ENCODE measurements at regions of chr19 and their contacts with region 1.

Region 1: GRCh38 chr19:34220472-34221063 is 33.8 kb upstream of the GARRE1 start:
- H3K4me3 ChIP-seq: no peak overlapping the region
- H3K27ac ChIP-seq: no peak overlapping the region
- H3K4me1 ChIP-seq: peaks cover 39% of the 10 kb centered on the region
- CTCF ChIP-seq: peak; percentile 73

Region 2: DNA sequence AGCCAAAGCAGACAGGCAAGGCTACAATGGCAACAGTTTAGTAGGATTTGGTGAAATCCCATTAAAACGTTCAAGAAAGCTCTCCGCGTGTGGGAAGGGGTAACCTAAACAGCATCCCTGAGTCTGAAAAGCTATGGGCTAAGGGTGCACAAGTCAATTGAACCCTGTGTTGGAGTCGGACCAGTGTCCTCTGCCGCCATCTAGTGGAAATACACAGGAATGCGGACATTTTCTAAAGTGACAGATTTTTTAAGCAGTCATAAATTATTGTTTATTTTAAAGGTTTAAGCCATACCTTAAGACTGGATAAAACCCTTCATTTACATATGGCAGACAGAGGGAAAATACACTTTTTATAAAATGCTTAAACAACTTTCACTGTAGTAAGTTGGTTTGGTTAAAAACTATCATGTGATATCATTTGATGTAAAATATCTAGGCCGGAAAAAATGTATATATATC is 74.8 kb before region 1 on chr19:
- CTCF ChIA-PET with region 1: interaction called, 17 read pairs
- POLR2A ChIA-PET with region 1: interaction called, 5 read pairs
- H3K4me3 ChIP-seq: no peak overlapping the region
- H3K27ac ChIP-seq: no peak overlapping the region
- H3K4me1 ChIP-seq: peaks cover 3% of the 10 kb centered on the region; the same call in 1 of the 2 replicates
- CTCF ChIP-seq: peak; percentile 93

Region 3: GRCh38 chr19:34178274-34178610 is 42.3 kb before region 1 on chr19:
- CTCF ChIA-PET with region 1: interaction called, 64 read pairs
- POLR2A ChIA-PET with region 1: interaction called, 12 read pairs
- H3K4me3 ChIP-seq: no peak overlapping the region
- H3K27ac ChIP-seq: peak overlapping the region; percentile 46; the same call in 1 of the 2 replicates
- H3K4me1 ChIP-seq: peaks cover 83% of the 10 kb centered on the region
- CTCF ChIP-seq: no peak

Region 4: GRCh38 chr19:34209726-34210125 is 10.8 kb before region 1 on chr19:
- CTCF ChIA-PET with region 1: interaction called, 15 read pairs
- POLR2A ChIA-PET with region 1: interaction called, 3 read pairs
- H3K4me3 ChIP-seq: no peak overlapping the region
- H3K27ac ChIP-seq: peak overlapping the region; percentile 16; the same call in 1 of the 2 replicates
- H3K4me1 ChIP-seq: peaks cover 7% of the 10 kb centered on the region
- CTCF ChIP-seq: no peak

Region 5: GRCh38 chr19:34336781-34337271 is 116.3 kb after region 1 on chr19:
- CTCF ChIA-PET with region 1: interaction called, 12 read pairs
- POLR2A ChIA-PET with region 1: no interaction called
- H3K4me3 ChIP-seq: no peak overlapping the region
- H3K27ac ChIP-seq: no peak overlapping the region
- H3K4me1 ChIP-seq: no peaks in the 10 kb centered on the region; the same call in 1 of the 2 replicates
- CTCF ChIP-seq: peak; percentile 56; the same call in 1 of the 2 replicates

Measured in HEK293 (cell line).